Prostate gland (tissue), 2 donors: ENCODE measurements at regions of chr9 and their contacts with region 1.

Region 1: GRCh38 chr9:12723409-12724028 is 30.3 kb downstream of the TYRP1 start:
- DNase-seq: no peak
- H3K4me3 ChIP-seq: no peak overlapping the region
- H3K27ac ChIP-seq: no peak overlapping the region
- H3K4me1 ChIP-seq: no peaks in the 10 kb centered on the region
- H3K27me3 ChIP-seq: no peaks in the 10 kb centered on the region
- CTCF ChIP-seq: peak; percentile 20 to 62 (median 56)
- POLR2A ChIP-seq: no peak

Region 2: DNA sequence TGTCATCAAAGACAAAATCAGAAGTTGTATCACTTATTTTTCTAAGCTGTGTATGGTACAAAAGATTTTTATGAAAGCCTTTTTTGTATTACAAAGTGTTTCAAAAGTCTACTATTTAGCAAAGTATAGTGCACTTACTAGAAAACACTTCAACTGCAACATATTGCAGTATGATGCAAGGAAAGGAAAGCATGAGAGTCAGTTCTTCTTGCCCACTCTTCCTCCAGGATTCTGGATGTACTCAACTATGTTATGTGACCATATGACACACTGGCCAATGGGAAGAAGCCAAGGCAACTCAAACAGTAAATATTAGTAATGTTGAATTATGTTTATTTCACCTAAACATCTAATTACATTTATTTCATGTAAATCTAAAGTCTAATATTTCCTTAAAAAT is 79.8 kb before region 1 on chr9:
- intact Hi-C with region 1: no loop called
- DNase-seq: no peak
- H3K4me3 ChIP-seq: no peak overlapping the region
- H3K27ac ChIP-seq: no peak overlapping the region
- H3K4me1 ChIP-seq: no peaks in the 10 kb centered on the region
- H3K27me3 ChIP-seq: no peaks in the 10 kb centered on the region
- CTCF ChIP-seq: no peak
- POLR2A ChIP-seq: no peak

Region 3: GRCh38 chr9:12702160-12702758 is 21.3 kb before region 1 on chr9:
- intact Hi-C with region 1: no loop called
- DNase-seq: peak; percentile 16
- H3K4me3 ChIP-seq: no peak overlapping the region
- H3K27ac ChIP-seq: no peak overlapping the region
- H3K4me1 ChIP-seq: no peaks in the 10 kb centered on the region
- H3K27me3 ChIP-seq: no peaks in the 10 kb centered on the region
- CTCF ChIP-seq: peak in 3 of 4 experiments; percentile 12 to 54 (median 37)
- POLR2A ChIP-seq: no peak

Region 4: GRCh38 chr9:12775679-12776512 is 52.4 kb after region 1 on chr9:
- intact Hi-C with region 1: loop called (anchors 10 kb)
- DNase-seq: peak; percentile 78
- H3K4me3 ChIP-seq: peak overlapping the region; percentile 58 to 63
- H3K27ac ChIP-seq: peak overlapping the region; percentile 78 to 79
- H3K4me1 ChIP-seq: no peaks in the 10 kb centered on the region
- H3K27me3 ChIP-seq: no peaks in the 10 kb centered on the region
- CTCF ChIP-seq: peak in 3 of 4 experiments; percentile 32 to 53 (median 45)
- POLR2A ChIP-seq: peak; percentile 39

Region 5: DNA sequence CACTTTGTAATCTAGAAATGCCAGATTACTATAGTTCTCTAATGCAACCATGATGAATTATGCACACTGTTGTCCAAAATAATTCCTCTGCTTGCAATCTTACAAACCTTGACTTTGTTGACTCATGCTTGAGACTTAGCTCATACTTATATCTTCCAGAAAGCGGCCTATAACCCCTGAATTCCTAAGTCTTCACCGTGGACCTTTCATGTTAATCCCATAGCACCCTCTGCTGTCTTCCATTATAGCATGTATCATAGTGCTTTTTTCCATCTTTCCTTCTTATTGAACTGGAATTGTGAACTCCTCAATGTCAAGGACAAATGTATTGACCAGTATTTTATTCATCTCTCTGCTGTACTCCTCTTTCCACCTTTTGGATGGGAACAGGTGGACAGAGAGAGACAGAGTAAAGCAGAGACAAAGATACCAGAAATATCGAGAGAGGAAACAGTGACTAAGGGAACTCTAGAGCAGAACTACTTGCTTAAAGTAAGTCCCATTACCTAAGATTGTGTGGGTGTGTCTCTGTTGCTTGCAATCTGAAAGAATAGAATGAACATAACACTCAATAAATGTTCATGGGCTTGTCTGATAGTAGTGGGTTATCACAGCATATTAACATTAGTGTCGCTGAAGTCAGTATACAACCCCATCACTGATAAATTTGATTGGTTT is 161.4 kb after region 1 on chr9:
- intact Hi-C with region 1: loop called (anchors 2 kb)
- DNase-seq: no peak
- H3K4me3 ChIP-seq: no peak overlapping the region
- H3K27ac ChIP-seq: no peak overlapping the region
- H3K4me1 ChIP-seq: no peaks in the 10 kb centered on the region
- H3K27me3 ChIP-seq: no peaks in the 10 kb centered on the region
- CTCF ChIP-seq: peak in 3 of 4 experiments; percentile 46 to 74 (median 58)
- POLR2A ChIP-seq: no peak

Region 6: DNA sequence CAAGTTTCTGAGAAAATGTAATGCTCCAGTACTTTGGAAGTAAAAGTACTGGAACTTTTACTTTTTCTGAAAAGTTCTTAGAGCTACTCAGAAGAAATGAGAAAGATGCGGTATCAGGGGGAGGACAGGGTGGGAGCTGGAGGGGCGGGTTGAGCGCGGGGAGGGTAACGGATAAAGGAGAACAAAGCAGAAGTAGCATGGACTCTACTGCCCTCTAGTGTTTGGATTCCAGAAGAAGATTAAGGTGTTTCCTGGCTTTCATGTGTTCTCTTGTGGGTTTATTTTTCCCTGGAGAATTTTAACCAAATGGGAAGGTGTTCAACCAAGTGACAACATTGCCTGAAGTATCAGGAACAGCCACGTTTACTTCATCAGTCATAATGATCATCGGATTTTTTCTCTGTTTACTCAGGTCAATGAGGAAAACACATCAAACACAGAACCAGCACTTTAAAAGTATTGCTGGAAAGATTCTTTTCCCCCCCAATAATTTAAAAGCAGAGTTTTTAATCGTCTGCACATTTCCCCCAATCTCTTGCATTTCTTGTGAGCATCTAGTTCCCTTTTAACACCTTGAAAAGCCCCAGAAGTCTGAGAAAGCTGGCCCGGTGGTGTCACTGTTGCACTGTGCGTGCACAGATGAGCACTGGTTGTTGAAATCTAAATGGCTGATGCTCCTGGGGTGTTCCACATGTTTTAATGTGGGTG is 365.4 kb after region 1 on chr9:
- intact Hi-C with region 1: loop called (anchors 5 kb)
- DNase-seq: peak; percentile 43
- H3K4me3 ChIP-seq: no peak overlapping the region
- H3K27ac ChIP-seq: peak overlapping the region in 1 of 2 donors; percentile 6
- H3K4me1 ChIP-seq: peaks cover 6% of the 10 kb centered on the region
- H3K27me3 ChIP-seq: no peaks in the 10 kb centered on the region
- CTCF ChIP-seq: peak; percentile 53 to 90 (median 69)
- POLR2A ChIP-seq: no peak